Heart right ventricle (tissue), 16 donors: ENCODE measurements at regions of chr14 and their contacts with region 1.

Region 1: GRCh38 chr14:101147848-101148826 is 244.6 kb upstream of the RTL1 start:
- DNase-seq: no peak
- ATAC-seq: no peak
- H3K4me3 ChIP-seq: no peak overlapping the region
- H3K27ac ChIP-seq: no peak overlapping the region
- H3K4me1 ChIP-seq: no peaks in the 10 kb centered on the region
- H3K27me3 ChIP-seq: peaks cover 0 to 23% (median 14%) of the 10 kb centered on the region in 7 donors
- CTCF ChIP-seq: no peak

Region 2: DNA sequence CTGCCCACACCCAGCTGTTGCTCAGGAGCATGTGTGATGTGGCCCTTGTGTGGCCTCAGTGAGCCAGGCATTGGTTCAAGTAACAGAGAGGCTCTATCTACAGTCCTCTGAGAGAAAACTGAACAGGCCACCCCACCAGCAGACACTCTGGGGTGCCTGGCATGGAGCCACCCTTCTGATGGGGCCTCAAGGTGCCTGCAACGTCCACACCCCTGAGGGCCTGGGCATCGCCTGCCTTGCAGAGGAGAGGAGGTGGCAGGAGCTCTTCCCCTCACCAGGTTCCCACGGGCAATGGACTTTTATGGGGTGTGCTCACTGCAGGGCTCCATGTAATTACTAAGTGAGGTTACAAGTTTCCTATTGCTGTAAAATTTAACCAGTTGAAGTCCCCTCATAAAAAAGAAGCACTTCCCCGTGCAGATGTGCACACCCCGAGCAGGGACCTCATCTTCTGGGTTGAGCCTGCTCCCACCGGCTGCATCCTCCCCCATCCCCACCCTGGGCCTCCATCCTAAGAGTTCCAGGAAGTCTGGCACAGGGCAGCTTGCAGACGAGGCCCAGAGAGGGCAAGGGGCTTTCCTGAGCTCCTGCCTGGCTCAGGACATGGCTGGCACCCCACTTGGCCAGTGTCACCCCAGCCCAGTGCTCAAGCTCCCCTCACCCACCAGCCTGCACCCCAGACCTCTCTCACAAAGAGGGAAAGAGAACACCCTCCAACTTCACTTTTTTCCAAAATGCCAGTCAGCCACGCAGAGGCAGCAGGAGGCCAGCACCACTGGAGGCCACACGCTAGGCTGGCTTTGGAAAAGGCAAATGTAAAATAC is 25.8 kb after region 1 on chr14:
- intact Hi-C with region 1: loop called in 1 of 10 experiments (anchors 1 kb)
- DNase-seq: no peak
- ATAC-seq: no peak
- H3K4me3 ChIP-seq: no peak overlapping the region
- H3K27ac ChIP-seq: no peak overlapping the region
- H3K4me1 ChIP-seq: no peaks in the 10 kb centered on the region
- H3K27me3 ChIP-seq: peaks cover 0 to 11% (median 0%) of the 10 kb centered on the region in 7 donors
- CTCF ChIP-seq: no peak